ENCODE measurements at regions of chr20 and their contacts with region 1.

Region 1: DNA sequence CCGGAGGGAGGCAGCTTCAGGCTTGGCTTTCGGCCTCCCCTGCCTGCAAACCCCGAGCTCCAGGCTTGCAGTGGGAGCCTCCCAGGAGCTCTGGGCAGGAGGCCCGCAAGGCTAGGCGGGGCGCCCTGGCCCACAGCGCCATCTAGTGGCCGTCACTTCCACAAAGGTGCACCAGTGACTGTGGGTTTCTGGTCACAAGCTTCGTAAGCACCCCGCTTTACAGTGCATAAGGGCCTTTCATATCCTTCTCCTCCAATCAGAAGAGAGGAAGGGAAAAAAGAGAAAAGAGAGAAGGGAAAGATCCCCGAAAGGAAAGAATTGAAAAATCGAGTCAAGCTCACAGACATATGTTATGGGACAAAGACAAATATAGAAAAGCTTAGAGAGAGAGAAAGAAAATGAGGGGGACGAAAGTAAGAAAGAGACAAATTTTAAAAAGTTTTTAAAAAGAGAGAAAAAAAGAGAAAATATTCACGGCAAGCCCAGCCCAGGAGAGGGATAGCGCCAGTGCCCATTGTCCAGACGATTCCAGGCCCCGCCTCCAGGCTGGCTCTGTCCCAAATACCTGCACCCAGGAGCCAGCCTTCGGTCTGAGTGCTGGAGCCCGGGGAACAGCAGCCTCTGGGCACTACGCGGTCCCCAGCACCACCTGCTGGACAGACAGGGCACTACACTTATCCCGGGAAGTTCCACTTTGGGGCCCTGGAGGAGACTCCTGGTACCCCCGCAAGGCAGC is 207.1 kb downstream of the PREX1 start:
- DNase-seq: peak; percentile 90
- H3K4me3 Mint-ChIP-seq: peak overlapping the region; percentile 67
- H3K27ac Mint-ChIP-seq: peak overlapping the region; percentile 18
- H3K4me1 Mint-ChIP-seq: peaks cover 23% of the 10 kb centered on the region
- H3K27me3 Mint-ChIP-seq: no peaks in the 10 kb centered on the region
- CTCF ChIP-seq: peak; percentile 94

Region 2: DNA sequence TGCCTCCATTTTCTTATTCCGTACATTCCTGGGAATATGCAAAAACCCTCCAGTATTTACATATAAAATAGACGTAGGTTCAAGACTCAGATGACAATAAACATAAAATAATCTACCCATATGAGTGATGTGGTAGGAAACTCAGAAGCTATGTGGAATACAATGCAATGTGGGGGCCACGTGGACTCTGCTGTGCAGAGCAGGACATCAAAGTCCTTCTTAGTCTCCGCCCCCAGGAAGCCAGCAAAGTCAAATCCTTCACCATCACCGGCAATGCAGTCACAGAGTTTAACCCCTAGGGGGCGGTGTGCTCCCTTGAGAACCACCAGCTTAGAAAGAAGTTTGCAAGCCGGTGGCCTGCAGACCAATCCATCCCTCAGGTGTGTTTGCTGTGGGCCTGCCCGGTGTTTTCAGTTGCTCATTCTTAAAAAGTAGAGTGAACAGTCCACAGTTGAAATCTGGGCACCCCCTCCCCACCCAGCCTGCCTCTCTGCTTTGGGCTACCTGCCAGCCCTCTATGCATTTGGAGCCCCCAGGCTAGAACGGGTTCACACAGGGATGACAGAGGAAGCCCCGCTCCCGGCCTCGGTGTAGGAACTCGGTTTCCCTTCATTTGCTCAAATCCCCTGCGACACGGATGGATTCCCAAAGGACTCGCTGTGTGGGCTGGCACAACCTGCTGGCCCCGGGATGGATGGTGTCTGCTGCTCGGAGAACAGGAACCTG is 895.3 kb before region 1 on chr20:
- CTCF ChIA-PET with region 1: interaction called, 48 read pairs
- POLR2A ChIA-PET with region 1: interaction called, 6 read pairs
- intact Hi-C with region 1: loop called (anchors 1 kb)
- DNase-seq: peak; percentile 86
- H3K4me3 Mint-ChIP-seq: no peak overlapping the region
- H3K27ac Mint-ChIP-seq: no peak overlapping the region
- H3K4me1 Mint-ChIP-seq: no peaks in the 10 kb centered on the region
- H3K27me3 Mint-ChIP-seq: no peaks in the 10 kb centered on the region
- CTCF ChIP-seq: peak; percentile 94

Region 3: GRCh38 chr20:47792021-47792618 is 828.6 kb before region 1 on chr20:
- CTCF ChIA-PET with region 1: interaction called, 61 read pairs
- POLR2A ChIA-PET with region 1: interaction called, 32 read pairs
- intact Hi-C with region 1: loop called (anchors 1 kb)
- DNase-seq: peak; percentile 99
- H3K4me3 Mint-ChIP-seq: peak overlapping the region; percentile 77
- H3K27ac Mint-ChIP-seq: peak overlapping the region; percentile 94
- H3K4me1 Mint-ChIP-seq: peaks cover 50% of the 10 kb centered on the region
- H3K27me3 Mint-ChIP-seq: no peaks in the 10 kb centered on the region
- CTCF ChIP-seq: no peak

Region 4: GRCh38 chr20:47929363-47930123 is 691.1 kb before region 1 on chr20:
- CTCF ChIA-PET with region 1: interaction called, 27 read pairs
- POLR2A ChIA-PET with region 1: interaction called, 13 read pairs
- intact Hi-C with region 1: no loop called
- DNase-seq: peak; percentile 79
- H3K4me3 Mint-ChIP-seq: no peak overlapping the region
- H3K27ac Mint-ChIP-seq: peak overlapping the region; percentile 94
- H3K4me1 Mint-ChIP-seq: peaks cover 52% of the 10 kb centered on the region
- H3K27me3 Mint-ChIP-seq: no peaks in the 10 kb centered on the region
- CTCF ChIP-seq: no peak

Region 5: GRCh38 chr20:48295445-48295963 is 325.2 kb before region 1 on chr20:
- CTCF ChIA-PET with region 1: interaction called, 91 read pairs
- POLR2A ChIA-PET with region 1: interaction called, 12 read pairs
- intact Hi-C with region 1: loop called (anchors 1 kb)
- DNase-seq: peak; percentile 81
- H3K4me3 Mint-ChIP-seq: no peak overlapping the region
- H3K27ac Mint-ChIP-seq: peak overlapping the region; percentile 39
- H3K4me1 Mint-ChIP-seq: peaks cover 41% of the 10 kb centered on the region
- H3K27me3 Mint-ChIP-seq: peaks cover 8% of the 10 kb centered on the region
- CTCF ChIP-seq: peak; percentile 57

Region 6: DNA sequence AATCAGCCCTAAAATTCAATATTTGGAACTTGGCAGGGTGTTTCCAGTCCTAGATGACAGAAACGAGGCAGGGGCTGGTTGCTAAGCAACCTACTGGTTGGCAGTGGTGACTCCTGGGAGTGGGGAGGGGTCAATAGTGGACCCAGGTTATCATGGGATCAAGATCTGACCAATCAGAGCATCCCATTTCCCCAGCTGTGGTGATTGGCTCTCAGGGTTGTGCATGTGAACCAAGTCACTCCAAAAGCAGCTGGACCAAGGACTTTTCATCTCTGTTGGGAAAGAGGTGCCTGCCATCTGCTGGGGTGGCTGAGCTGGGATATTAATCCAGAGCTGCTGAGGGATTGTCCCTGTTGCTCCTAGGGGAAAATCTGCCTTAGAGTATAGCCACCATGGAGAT is 46.3 kb before region 1 on chr20:
- CTCF ChIA-PET with region 1: no interaction called
- POLR2A ChIA-PET with region 1: no interaction called
- intact Hi-C with region 1: no loop called
- DNase-seq: peak; percentile 13
- H3K4me3 Mint-ChIP-seq: no peak overlapping the region
- H3K27ac Mint-ChIP-seq: no peak overlapping the region
- H3K4me1 Mint-ChIP-seq: no peaks in the 10 kb centered on the region
- H3K27me3 Mint-ChIP-seq: peaks cover 63% of the 10 kb centered on the region
- CTCF ChIP-seq: no peak

Region 7: GRCh38 chr20:48609491-48609978 is 11.2 kb before region 1 on chr20:
- CTCF ChIA-PET with region 1: interaction called, 17 read pairs
- POLR2A ChIA-PET with region 1: interaction called, 4 read pairs
- intact Hi-C with region 1: no loop called
- DNase-seq: no peak
- H3K4me3 Mint-ChIP-seq: no peak overlapping the region
- H3K27ac Mint-ChIP-seq: no peak overlapping the region
- H3K4me1 Mint-ChIP-seq: peaks cover 4% of the 10 kb centered on the region
- H3K27me3 Mint-ChIP-seq: peaks cover 62% of the 10 kb centered on the region
- CTCF ChIP-seq: no peak

Measured in MCF 10A (cell line).